PC-9 (cell line): ENCODE measurements at regions of chr18 and their contacts with region 1.

Region 1: GRCh38 chr18:9417073-9417841 is 58.1 kb upstream of the RALBP1 start:
- DNase-seq: peak in 1 of 2 experiments; percentile 92
- H3K4me3 ChIP-seq: no peak overlapping the region
- H3K27ac ChIP-seq: no peak overlapping the region
- H3K4me1 ChIP-seq: peaks cover 9% of the 10 kb centered on the region
- H3K27me3 ChIP-seq: no peaks in the 10 kb centered on the region
- CTCF ChIP-seq: no peak

Region 2: GRCh38 chr18:9441061-9441460 is 23.8 kb after region 1 on chr18:
- CTCF ChIA-PET with region 1: no interaction called
- POLR2A ChIA-PET with region 1: interaction called, 16 read pairs
- intact Hi-C with region 1: no loop called
- DNase-seq: no peak
- H3K4me3 ChIP-seq: no peak overlapping the region
- H3K27ac ChIP-seq: no peak overlapping the region
- H3K4me1 ChIP-seq: no peaks in the 10 kb centered on the region
- H3K27me3 ChIP-seq: no peaks in the 10 kb centered on the region
- CTCF ChIP-seq: no peak